ENCODE measurements at regions of chr17 and their contacts with region 1.

Region 1: GRCh38 chr17:64420143-64420971 is 28.6 kb upstream of the MILR1 start:
- DNase-seq: peak; percentile 15
- H3K4me3 ChIP-seq: no peak overlapping the region
- H3K27me3 ChIP-seq: peaks cover 2% of the 10 kb centered on the region; the same call in 1 of the 2 replicates
- CTCF ChIP-seq: peak; percentile 71

Region 2: DNA sequence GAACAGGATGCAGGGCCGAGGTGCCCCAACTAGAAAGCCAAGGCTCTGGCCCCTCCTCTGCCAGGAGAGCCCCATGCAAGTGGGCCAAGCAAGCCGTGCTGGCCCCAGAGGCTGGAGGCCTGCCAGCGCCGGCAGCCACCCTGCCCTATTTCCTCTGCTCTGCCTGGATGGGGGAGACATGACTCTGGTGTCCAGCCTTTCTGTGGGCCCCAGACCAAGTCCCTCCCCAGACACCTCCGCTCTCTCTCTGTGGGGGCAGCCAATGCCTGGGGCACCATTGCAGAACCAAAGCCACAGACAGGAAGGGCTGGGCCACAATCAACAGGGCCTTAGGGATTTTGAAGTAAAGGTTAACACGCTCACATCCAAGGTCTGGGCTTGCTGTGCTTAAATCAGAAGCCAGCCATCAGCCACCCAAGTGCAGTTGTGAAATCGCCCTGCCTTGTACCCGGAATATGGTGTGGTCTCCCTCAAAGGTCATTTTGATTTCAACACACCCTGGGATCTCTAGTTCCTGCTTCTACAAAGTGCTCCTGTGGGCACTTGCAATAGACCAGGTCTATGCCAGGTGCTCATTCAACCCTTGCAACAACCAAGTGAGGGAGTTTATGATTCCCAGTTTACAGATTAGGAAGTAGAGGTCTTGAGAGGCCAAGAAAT is 93.8 kb before region 1 on chr17:
- CTCF ChIA-PET with region 1: interaction called, 481 read pairs
- POLR2A ChIA-PET with region 1: no interaction called
- DNase-seq: no peak
- H3K4me3 ChIP-seq: no peak overlapping the region
- H3K27me3 ChIP-seq: no peaks in the 10 kb centered on the region; the same call in 1 of the 2 replicates
- CTCF ChIP-seq: no peak

Region 3: GRCh38 chr17:64357191-64357981 is 63.0 kb before region 1 on chr17:
- CTCF ChIA-PET with region 1: interaction called, 18 read pairs
- POLR2A ChIA-PET with region 1: no interaction called
- DNase-seq: peak; percentile 99
- H3K4me3 ChIP-seq: no peak overlapping the region
- H3K27me3 ChIP-seq: peaks cover 9% of the 10 kb centered on the region
- CTCF ChIP-seq: 0 out of 2 replicates have a peak, but pooled peaks have one; percentile 5

Region 4: GRCh38 chr17:64406321-64407200 is 13.8 kb before region 1 on chr17:
- CTCF ChIA-PET with region 1: interaction called, 40 read pairs
- POLR2A ChIA-PET with region 1: interaction called, 3 read pairs
- DNase-seq: no peak
- H3K4me3 ChIP-seq: no peak overlapping the region
- H3K27me3 ChIP-seq: no peaks in the 10 kb centered on the region; the same call in 1 of the 2 replicates
- CTCF ChIP-seq: no peak

Region 5: GRCh38 chr17:64479650-64480049 is 59.3 kb after region 1 on chr17:
- CTCF ChIA-PET with region 1: interaction called, 30 read pairs
- POLR2A ChIA-PET with region 1: no interaction called
- DNase-seq: no peak
- H3K4me3 ChIP-seq: no peak overlapping the region
- H3K27me3 ChIP-seq: no peaks in the 10 kb centered on the region
- CTCF ChIP-seq: no peak

Region 6: DNA sequence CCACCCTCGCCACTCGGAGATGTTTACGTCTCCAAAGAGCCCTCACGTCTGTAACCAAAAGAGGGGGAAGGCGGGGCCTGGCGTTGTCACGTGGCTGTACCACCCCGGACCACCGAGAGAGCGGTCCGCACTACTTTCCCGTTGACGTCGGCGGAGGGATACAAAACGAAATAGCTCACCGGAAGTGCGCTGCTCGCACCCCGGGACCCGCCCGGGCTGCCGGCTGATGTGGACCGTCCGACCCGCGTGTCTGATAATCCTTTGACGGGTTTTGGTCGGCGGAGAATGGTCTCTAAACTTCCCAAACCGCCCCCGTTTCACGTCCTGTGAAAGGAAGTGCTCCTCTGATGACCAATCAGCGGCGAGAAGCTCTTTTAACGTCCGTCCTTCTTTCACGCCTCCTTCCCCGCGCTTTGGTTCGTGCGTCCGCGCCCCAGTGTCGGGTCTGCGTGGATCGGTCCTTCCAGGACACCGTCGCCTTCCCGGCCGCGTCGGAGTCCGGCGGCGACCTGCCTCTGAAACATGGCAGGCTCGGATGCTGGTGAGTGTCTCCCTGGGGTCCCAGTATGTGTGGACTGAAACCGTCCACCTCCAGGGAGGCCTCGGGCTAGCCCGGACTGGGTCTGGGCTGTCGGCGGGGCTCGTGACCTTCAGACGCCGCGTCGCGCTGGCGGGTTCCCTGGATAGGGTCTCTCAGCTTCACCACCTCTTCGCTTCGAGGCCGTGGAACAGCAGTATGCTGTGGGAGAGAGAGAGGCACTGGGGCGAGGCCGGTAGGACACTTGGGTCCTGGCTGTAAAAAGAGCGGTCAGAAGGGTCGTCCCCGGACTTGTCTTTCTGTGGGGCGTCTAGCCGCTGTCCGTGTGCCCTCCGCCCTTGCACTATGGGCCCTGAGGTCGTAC is 86.5 kb after region 1 on chr17 and contains the start of gene CEP95:
- CTCF ChIA-PET with region 1: interaction called, 19 read pairs
- POLR2A ChIA-PET with region 1: no interaction called
- DNase-seq: peak; percentile 80
- H3K4me3 ChIP-seq: peak within 1 kb of the TSS; percentile 99
- H3K27me3 ChIP-seq: no peaks in the 10 kb centered on the region
- CTCF ChIP-seq: no peak
- polyA plus RNA-seq, gene CEP95: 17.6 and 26.3 TPM in 2 replicates